CD8-positive, alpha-beta T cell (primary cell): ENCODE measurements at regions of chr20 and their contacts with region 1.

Region 1: GRCh38 chr20:3888622-3889488 is at the start of gene PANK2:
- DNase-seq: peak; percentile 95 to 99 (median 97)
- ATAC-seq: peak; percentile 95
- H3K4me3 ChIP-seq: peak within 1 kb of the TSS; percentile 83 to 97
- H3K4me3 Mint-ChIP-seq: peak within 1 kb of the TSS; percentile 97
- H3K27ac ChIP-seq: peak within 1 kb of the TSS; percentile 72 to 81
- H3K27ac Mint-ChIP-seq: peak within 1 kb of the TSS; percentile 96
- H3K4me1 ChIP-seq: peaks cover 37% of the 10 kb centered on the region
- H3K4me1 Mint-ChIP-seq: peaks cover 57% of the 10 kb centered on the region
- H3K27me3 ChIP-seq: no peaks in the 10 kb centered on the region
- H3K27me3 Mint-ChIP-seq: no peaks in the 10 kb centered on the region
- CTCF ChIP-seq: no peak
- total RNA-seq, gene PANK2: 44.2 to 53.5 TPM

Region 2: GRCh38 chr20:3786665-3787323 is 102.1 kb before region 1 on chr20 and contains the start of gene CENPB:
- CTCF ChIA-PET with region 1: no interaction called
- POLR2A ChIA-PET with region 1: no interaction called
- intact Hi-C with region 1: loop called in 1 of 2 experiments (anchors 1 kb)
- DNase-seq: peak; percentile 83 to 95 (median 90)
- ATAC-seq: peak; percentile 87
- H3K4me3 ChIP-seq: peak within 1 kb of the TSS; percentile 46 to 55
- H3K4me3 Mint-ChIP-seq: peak within 1 kb of the TSS; percentile 84
- H3K27ac ChIP-seq: peak within 1 kb of the TSS; percentile 37 to 75
- H3K27ac Mint-ChIP-seq: peak within 1 kb of the TSS; percentile 91
- H3K4me1 ChIP-seq: peaks cover 24% of the 10 kb centered on the region
- H3K4me1 Mint-ChIP-seq: peaks cover 30% of the 10 kb centered on the region
- H3K27me3 ChIP-seq: no peaks in the 10 kb centered on the region
- H3K27me3 Mint-ChIP-seq: no peaks in the 10 kb centered on the region
- CTCF ChIP-seq: peak; percentile 86
- total RNA-seq, gene CENPB: 23.2 to 24.1 TPM

Region 3: GRCh38 chr20:3820048-3820900 is 68.6 kb before region 1 on chr20 and contains the start of gene AP5S1:
- CTCF ChIA-PET with region 1: interaction called, 12 read pairs
- POLR2A ChIA-PET with region 1: interaction called, 4 read pairs
- intact Hi-C with region 1: loop called (anchors 1 kb)
- DNase-seq: peak; percentile 81 to 96 (median 89)
- ATAC-seq: peak; percentile 85
- H3K4me3 ChIP-seq: peak within 1 kb of the TSS; percentile 60 to 64
- H3K4me3 Mint-ChIP-seq: peak within 1 kb of the TSS; percentile 92
- H3K27ac ChIP-seq: peak within 1 kb of the TSS; percentile 92 to 97
- H3K27ac Mint-ChIP-seq: peak within 1 kb of the TSS; percentile 98
- H3K4me1 ChIP-seq: peaks cover 51% of the 10 kb centered on the region
- H3K4me1 Mint-ChIP-seq: peaks cover 51% of the 10 kb centered on the region
- H3K27me3 ChIP-seq: no peaks in the 10 kb centered on the region
- H3K27me3 Mint-ChIP-seq: no peaks in the 10 kb centered on the region
- CTCF ChIP-seq: peak; percentile 94
- total RNA-seq, gene AP5S1: 5.2 to 6.3 TPM

Region 4: GRCh38 chr20:3911956-3912355 is 23.1 kb after region 1 on chr20:
- CTCF ChIA-PET with region 1: interaction called, 4 read pairs
- POLR2A ChIA-PET with region 1: no interaction called
- intact Hi-C with region 1: loop called (anchors 2 kb)
- DNase-seq: no peak
- ATAC-seq: no peak
- H3K4me3 ChIP-seq: no peak overlapping the region
- H3K4me3 Mint-ChIP-seq: no peak overlapping the region
- H3K27ac ChIP-seq: no peak overlapping the region
- H3K27ac Mint-ChIP-seq: no peak overlapping the region
- H3K4me1 ChIP-seq: peaks cover 16% of the 10 kb centered on the region
- H3K4me1 Mint-ChIP-seq: peaks cover 52% of the 10 kb centered on the region
- H3K27me3 ChIP-seq: no peaks in the 10 kb centered on the region
- H3K27me3 Mint-ChIP-seq: no peaks in the 10 kb centered on the region
- CTCF ChIP-seq: no peak

Region 5: GRCh38 chr20:3980260-3981131 is 91.6 kb after region 1 on chr20:
- CTCF ChIA-PET with region 1: no interaction called
- POLR2A ChIA-PET with region 1: no interaction called
- intact Hi-C with region 1: loop called in 1 of 2 experiments (anchors 10 kb)
- DNase-seq: peak in 3 of 9 experiments; percentile 10 to 61 (median 54)
- ATAC-seq: peak; percentile 56
- H3K4me3 ChIP-seq: peak overlapping the region; percentile 26 to 38
- H3K4me3 Mint-ChIP-seq: peak overlapping the region; percentile 84
- H3K27ac ChIP-seq: peak overlapping the region; percentile 43 to 70
- H3K27ac Mint-ChIP-seq: peak overlapping the region; percentile 91
- H3K4me1 ChIP-seq: peaks cover 10% of the 10 kb centered on the region
- H3K4me1 Mint-ChIP-seq: peaks cover 23% of the 10 kb centered on the region
- H3K27me3 ChIP-seq: no peaks in the 10 kb centered on the region
- H3K27me3 Mint-ChIP-seq: no peaks in the 10 kb centered on the region
- CTCF ChIP-seq: no peak

Region 6: GRCh38 chr20:4038047-4038459 is 149.2 kb after region 1 on chr20:
- CTCF ChIA-PET with region 1: no interaction called
- POLR2A ChIA-PET with region 1: no interaction called
- intact Hi-C with region 1: loop called in 1 of 2 experiments (anchors 1 kb)
- DNase-seq: peak; percentile 62 to 94 (median 80)
- ATAC-seq: peak; percentile 100
- H3K4me3 ChIP-seq: peak overlapping the region; percentile 11 to 23
- H3K4me3 Mint-ChIP-seq: peak overlapping the region; percentile 80
- H3K27ac ChIP-seq: peak overlapping the region; percentile 45 to 66
- H3K27ac Mint-ChIP-seq: peak overlapping the region; percentile 97
- H3K4me1 ChIP-seq: peaks cover 20% of the 10 kb centered on the region
- H3K4me1 Mint-ChIP-seq: peaks cover 16% of the 10 kb centered on the region
- H3K27me3 ChIP-seq: no peaks in the 10 kb centered on the region
- H3K27me3 Mint-ChIP-seq: no peaks in the 10 kb centered on the region
- CTCF ChIP-seq: no peak

Region 7: GRCh38 chr20:4533368-4534133 is 644.7 kb after region 1 on chr20:
- CTCF ChIA-PET with region 1: no interaction called
- POLR2A ChIA-PET with region 1: no interaction called
- intact Hi-C with region 1: no loop called
- DNase-seq: no peak
- ATAC-seq: no peak
- H3K4me3 ChIP-seq: no peak overlapping the region
- H3K4me3 Mint-ChIP-seq: no peak overlapping the region
- H3K27ac ChIP-seq: no peak overlapping the region
- H3K27ac Mint-ChIP-seq: no peak overlapping the region
- H3K4me1 ChIP-seq: no peaks in the 10 kb centered on the region
- H3K4me1 Mint-ChIP-seq: no peaks in the 10 kb centered on the region
- H3K27me3 ChIP-seq: peaks cover 3 to 4% of the 10 kb centered on the region in 2 experiments
- H3K27me3 Mint-ChIP-seq: peaks cover 19% of the 10 kb centered on the region
- CTCF ChIP-seq: no peak